A549 (cell line): ENCODE measurements at regions of chr13 and their contacts with region 1.

Region 1: DNA sequence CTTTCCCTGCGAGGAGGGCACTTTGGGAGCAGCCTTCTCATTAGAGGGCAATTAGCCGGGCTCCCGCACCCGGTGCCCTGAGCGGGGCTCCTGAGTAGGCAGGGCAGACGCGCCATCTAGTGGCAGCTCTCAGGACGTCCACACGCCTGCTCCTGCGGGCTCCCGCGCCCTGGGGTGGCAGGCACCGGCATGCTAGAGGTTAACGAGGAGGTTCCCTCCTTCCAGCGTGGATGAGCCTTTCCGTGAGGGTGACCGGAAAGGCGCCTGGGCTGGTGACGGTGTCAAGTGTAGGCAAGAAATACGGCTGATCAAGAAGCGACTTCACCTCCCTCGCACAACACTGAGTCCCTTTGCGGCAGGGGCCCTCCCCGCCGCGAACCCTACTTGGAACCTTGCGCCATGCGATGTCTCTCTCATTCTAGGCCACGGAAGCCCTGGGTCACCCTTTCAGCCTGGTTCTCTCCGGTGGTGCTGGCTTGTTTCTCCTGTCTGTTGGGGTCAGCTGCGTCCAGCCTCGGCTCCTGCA is 67.7 kb downstream of the ALOX5AP start:
- DNase-seq: peak; percentile 44 to 71
- ATAC-seq: peak; percentile 97 to 99
- H3K4me3 ChIP-seq: no peak overlapping the region
- H3K27ac ChIP-seq: peak overlapping the region; percentile 62 to 81
- H3K4me1 ChIP-seq: peaks cover 8% of the 10 kb centered on the region; the same call in 1 of the 3 replicates
- CTCF ChIP-seq: peak; percentile 80
- EP300 ChIP-seq: no peak
- POLR2A ChIP-seq: no peak
- RAD21 ChIP-seq: peak; percentile 87 to 95

Region 2: GRCh38 chr13:30679483-30680330 is 123.3 kb before region 1 on chr13:
- CTCF ChIA-PET with region 1: interaction called, 17 read pairs
- POLR2A ChIA-PET with region 1: no interaction called
- DNase-seq: peak; percentile 19 to 40
- ATAC-seq: peak; percentile 94 to 96
- H3K4me3 ChIP-seq: no peak overlapping the region
- H3K27ac ChIP-seq: peak overlapping the region in 1 of 2 experiments; percentile 33; a peak in 1 of 6 replicates
- H3K4me1 ChIP-seq: no peaks in the 10 kb centered on the region; the same call in 2 of the 3 replicates
- CTCF ChIP-seq: peak; percentile 47
- EP300 ChIP-seq: no peak
- POLR2A ChIP-seq: no peak
- RAD21 ChIP-seq: peak; percentile 62 to 72

Region 3: GRCh38 chr13:30745906-30746686 is 56.9 kb before region 1 on chr13:
- CTCF ChIA-PET with region 1: interaction called, 12 read pairs
- POLR2A ChIA-PET with region 1: no interaction called
- DNase-seq: no peak
- ATAC-seq: no peak
- H3K4me3 ChIP-seq: no peak overlapping the region
- H3K27ac ChIP-seq: peak overlapping the region; percentile 90 to 94; a peak in 5 of 6 replicates
- H3K4me1 ChIP-seq: peaks cover 51% of the 10 kb centered on the region
- CTCF ChIP-seq: no peak
- EP300 ChIP-seq: no peak
- POLR2A ChIP-seq: no peak
- RAD21 ChIP-seq: no peak

Region 4: DNA sequence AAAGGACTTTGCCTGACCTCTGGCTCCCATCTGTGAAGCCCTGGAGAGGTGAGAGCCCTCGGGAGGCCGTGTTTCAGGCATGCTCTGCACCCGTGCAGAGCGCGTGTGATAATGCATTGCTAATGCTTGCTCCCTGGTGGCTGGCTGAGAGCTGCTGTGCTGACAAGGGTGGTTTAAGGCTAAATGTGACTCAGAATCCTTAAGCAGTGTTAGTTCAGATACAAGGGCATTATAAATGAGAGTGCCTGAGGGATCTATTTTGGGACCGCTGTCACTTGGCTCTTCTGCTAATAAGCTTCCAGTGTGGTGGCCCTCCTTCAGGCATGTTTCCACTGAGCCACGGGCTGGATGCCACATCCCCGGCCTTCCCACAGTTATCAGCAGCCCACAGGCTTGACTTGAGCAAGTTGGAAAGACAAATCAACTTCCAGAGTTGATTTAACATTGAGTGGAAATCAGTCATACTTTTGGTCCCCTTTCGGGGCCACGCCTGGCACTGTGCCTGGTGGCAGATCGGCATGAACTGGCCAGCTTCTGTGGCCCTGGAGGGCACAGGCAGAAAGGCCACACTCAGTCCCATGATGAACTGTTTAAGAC is 50.7 kb before region 1 on chr13:
- CTCF ChIA-PET with region 1: interaction called, 12 read pairs
- POLR2A ChIA-PET with region 1: no interaction called
- DNase-seq: no peak
- ATAC-seq: no peak
- H3K4me3 ChIP-seq: no peak overlapping the region
- H3K27ac ChIP-seq: no peak overlapping the region
- H3K4me1 ChIP-seq: no peaks in the 10 kb centered on the region
- CTCF ChIP-seq: no peak
- EP300 ChIP-seq: no peak
- POLR2A ChIP-seq: no peak
- RAD21 ChIP-seq: no peak

Region 5: GRCh38 chr13:30792285-30793000 is 10.6 kb before region 1 on chr13:
- CTCF ChIA-PET with region 1: interaction called, 40 read pairs
- POLR2A ChIA-PET with region 1: no interaction called
- DNase-seq: peak; percentile 33 to 36
- ATAC-seq: peak; percentile 89 to 93
- H3K4me3 ChIP-seq: no peak overlapping the region
- H3K27ac ChIP-seq: peak overlapping the region; percentile 54 to 79; a peak in 5 of 6 replicates
- H3K4me1 ChIP-seq: peaks cover 21% of the 10 kb centered on the region
- CTCF ChIP-seq: no peak
- EP300 ChIP-seq: no peak
- POLR2A ChIP-seq: no peak
- RAD21 ChIP-seq: no peak

Region 6: GRCh38 chr13:30818323-30818960 is 15.4 kb after region 1 on chr13:
- CTCF ChIA-PET with region 1: interaction called, 11 read pairs
- POLR2A ChIA-PET with region 1: no interaction called
- DNase-seq: no peak
- ATAC-seq: no peak
- H3K4me3 ChIP-seq: no peak overlapping the region
- H3K27ac ChIP-seq: no peak overlapping the region; a peak in 1 of 6 replicates
- H3K4me1 ChIP-seq: peaks cover 8% of the 10 kb centered on the region; the same call in 2 of the 3 replicates
- CTCF ChIP-seq: no peak
- EP300 ChIP-seq: no peak
- POLR2A ChIP-seq: no peak
- RAD21 ChIP-seq: no peak